ENCODE measurements at regions of chr5 and their contacts with region 1.

Region 1: DNA sequence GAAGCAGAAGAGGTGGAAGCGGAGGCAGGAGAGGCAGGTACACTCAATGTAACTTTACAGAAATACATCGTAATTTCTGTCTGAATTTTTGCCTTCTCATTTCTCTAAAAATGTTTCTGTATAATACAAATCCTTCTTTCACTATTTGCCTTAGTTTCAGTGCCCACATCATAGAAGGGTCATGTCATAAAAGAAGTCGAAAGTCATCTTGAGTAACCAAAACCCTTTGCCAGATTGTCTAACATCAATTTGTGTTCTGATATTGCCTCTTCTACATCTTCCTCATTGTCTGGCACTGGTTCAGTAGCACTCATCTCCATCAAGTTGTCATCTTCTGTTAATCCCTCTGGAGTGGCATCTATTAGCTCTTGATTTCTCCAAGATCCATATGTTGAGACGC is 6.2 kb upstream of the CYFIP2 start:
- DNase-seq: no peak
- ATAC-seq: no peak
- H3K4me3 ChIP-seq: no peak overlapping the region
- H3K27ac ChIP-seq: no peak overlapping the region
- H3K4me1 ChIP-seq: no peaks in the 10 kb centered on the region
- H3K27me3 ChIP-seq: no peaks in the 10 kb centered on the region
- CTCF ChIP-seq: no peak

Region 2: DNA sequence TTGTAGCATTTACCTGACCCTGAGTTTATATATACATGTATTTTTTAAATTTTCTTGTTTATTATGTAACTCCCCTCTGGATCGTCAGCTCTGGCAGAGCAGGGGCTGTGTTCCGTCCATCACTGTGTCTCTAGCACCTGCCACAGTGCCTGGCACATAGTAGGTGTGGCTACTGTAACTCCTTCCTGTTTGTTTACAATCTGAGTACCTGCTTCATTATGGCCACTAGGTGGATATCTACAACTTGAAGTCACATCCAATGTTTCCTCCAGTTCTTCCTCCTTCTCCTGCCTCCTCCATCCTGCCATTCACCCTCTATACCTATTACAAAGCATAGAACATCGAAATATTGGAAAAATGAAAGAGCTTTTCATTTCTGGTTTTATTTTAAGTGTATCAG is 423.8 kb before region 1 on chr5:
- intact Hi-C with region 1: no loop called
- DNase-seq: no peak
- ATAC-seq: no peak
- H3K4me3 ChIP-seq: no peak overlapping the region
- H3K27ac ChIP-seq: no peak overlapping the region
- H3K4me1 ChIP-seq: no peaks in the 10 kb centered on the region
- H3K27me3 ChIP-seq: no peaks in the 10 kb centered on the region
- CTCF ChIP-seq: no peak

Region 3: DNA sequence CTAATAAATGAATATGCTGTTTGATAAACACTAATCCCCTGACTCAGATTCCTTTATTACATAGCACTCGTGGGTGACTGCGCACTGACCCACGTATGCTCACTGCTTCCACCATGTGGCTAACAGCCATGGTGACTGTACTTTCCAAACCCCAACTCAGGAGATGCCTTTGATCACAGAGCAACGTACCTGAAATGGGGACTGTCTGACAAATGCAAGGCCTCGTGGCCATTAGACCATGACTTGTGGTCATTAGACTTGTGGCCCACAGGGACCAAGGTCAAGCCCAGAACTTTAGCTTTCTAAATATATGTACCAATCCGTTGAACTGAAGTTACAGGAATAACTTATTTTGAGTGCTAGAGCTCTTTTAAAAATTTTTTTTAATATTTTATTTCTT is 52.8 kb after region 1 on chr5:
- intact Hi-C with region 1: loop called in 1 of 3 experiments (anchors 5 kb)
- DNase-seq: peak in 1 of 6 donors; percentile 28
- ATAC-seq: peak; percentile 46 to 90 (median 83)
- H3K4me3 ChIP-seq: no peak overlapping the region
- H3K27ac ChIP-seq: no peak overlapping the region
- H3K4me1 ChIP-seq: no peaks in the 10 kb centered on the region
- H3K27me3 ChIP-seq: no peaks in the 10 kb centered on the region
- CTCF ChIP-seq: peak in 3 of 4 donors; percentile 23 to 40 (median 37)

Region 4: GRCh38 chr5:157575381-157576020 is 315.8 kb after region 1 on chr5 and contains the start of gene ADAM19:
- intact Hi-C with region 1: no loop called
- DNase-seq: peak in 3 of 6 donors; percentile 34 to 84 (median 73)
- ATAC-seq: peak; percentile 81 to 86 (median 82)
- H3K4me3 ChIP-seq: peak within 1 kb of the TSS; percentile 31 to 63 (median 45)
- H3K27ac ChIP-seq: peak within 1 kb of the TSS in 1 of 4 donors; percentile 19
- H3K4me1 ChIP-seq: peaks cover 0 to 5% (median 0%) of the 10 kb centered on the region in 3 donors
- H3K27me3 ChIP-seq: peaks cover 0 to 8% (median 0%) of the 10 kb centered on the region in 4 donors
- CTCF ChIP-seq: no peak
- total RNA-seq, gene ADAM19: 0.47 to 3.0 (median 0.83) TPM